Cardiac septum (tissue), 1 donor: ENCODE measurements at regions of chr4 and their contacts with region 1.

Region 1: DNA sequence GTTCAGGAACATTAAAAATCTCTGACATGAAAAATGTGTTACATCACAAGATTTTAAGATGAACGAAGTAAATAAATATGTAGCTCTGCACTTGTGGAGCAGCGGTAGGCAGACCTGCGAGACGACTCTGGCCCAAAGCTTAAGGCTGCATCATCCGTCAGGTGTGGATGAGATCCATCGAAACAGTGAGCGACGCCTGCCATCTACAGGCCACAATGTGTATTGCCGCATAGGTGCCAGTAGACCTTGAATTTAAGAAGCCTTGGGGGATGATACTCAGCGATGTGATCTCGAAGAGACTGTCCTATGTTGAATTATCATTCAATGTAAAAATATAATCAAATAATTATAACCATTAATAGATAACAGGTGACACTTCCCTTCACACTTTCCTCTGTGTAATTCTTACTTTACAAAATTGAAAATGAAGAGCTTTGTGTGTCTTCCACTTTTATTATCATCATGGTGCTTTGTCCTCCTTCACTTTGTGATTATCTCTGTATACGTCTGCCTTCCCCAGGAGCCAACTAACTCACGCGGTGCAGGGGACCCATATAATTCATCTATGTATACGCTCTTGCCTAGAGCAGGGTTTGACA is 851.0 kb downstream of the RAB28 start:
- DNase-seq: no peak

Region 2: DNA sequence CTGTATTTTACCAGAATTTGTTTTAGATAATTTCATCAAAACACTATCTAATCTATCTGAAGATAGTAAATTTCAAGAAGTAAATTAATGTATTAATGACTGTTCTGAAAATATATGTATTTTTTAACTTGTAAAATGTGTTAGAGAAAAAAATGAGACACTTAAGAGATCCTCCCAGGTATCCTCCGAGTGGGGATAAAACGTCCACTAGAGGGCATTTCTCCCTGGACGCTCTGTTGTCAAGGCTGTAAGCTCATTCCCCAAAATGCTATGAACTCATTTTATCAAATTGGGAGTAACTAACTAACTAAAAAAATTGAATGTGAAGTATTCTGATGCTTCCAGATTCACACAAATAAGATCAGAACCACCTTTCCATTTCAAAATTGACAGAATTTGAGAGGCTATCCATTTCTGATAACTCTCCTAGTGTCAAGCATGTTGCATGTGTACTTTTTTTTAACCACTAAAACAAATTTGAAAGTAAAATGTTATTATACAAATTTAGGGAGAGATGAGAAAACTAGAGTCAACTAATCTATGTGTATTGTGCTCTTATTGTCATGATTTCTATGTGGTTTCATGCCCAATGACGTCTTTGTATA is 867.2 kb before region 1 on chr4:
- intact Hi-C with region 1: loop called (anchors 5 kb)
- DNase-seq: no peak

Region 3: DNA sequence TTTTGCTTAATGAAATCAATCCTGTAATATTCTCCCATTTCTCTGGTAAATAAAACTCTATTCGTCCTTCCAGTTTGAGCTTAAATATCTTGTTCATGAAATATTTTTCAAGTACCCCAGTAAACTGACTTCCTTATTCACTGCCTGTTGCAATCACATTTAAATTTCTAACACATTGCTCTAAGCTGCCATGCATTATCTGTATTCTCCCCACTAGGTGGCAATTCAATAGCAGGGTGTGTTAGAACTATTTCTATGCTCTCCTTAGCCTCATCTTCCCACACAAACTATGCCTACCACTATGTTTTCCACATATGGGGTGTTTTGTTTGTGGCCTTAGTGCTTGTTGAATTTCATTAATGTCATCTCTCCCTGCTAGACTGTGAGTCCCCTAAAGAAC is 827.3 kb before region 1 on chr4:
- intact Hi-C with region 1: loop called (anchors 5 kb)
- DNase-seq: no peak

Region 4: GRCh38 chr4:12041828-12042227 is 591.3 kb before region 1 on chr4:
- intact Hi-C with region 1: loop called (anchors 2 kb)
- DNase-seq: no peak

Region 5: GRCh38 chr4:12178614-12179610 is 454.2 kb before region 1 on chr4:
- intact Hi-C with region 1: loop called (anchors 10 kb)
- DNase-seq: no peak